H1 (cell line): ENCODE measurements at regions of chr18 and their contacts with region 1.

Region 1: DNA sequence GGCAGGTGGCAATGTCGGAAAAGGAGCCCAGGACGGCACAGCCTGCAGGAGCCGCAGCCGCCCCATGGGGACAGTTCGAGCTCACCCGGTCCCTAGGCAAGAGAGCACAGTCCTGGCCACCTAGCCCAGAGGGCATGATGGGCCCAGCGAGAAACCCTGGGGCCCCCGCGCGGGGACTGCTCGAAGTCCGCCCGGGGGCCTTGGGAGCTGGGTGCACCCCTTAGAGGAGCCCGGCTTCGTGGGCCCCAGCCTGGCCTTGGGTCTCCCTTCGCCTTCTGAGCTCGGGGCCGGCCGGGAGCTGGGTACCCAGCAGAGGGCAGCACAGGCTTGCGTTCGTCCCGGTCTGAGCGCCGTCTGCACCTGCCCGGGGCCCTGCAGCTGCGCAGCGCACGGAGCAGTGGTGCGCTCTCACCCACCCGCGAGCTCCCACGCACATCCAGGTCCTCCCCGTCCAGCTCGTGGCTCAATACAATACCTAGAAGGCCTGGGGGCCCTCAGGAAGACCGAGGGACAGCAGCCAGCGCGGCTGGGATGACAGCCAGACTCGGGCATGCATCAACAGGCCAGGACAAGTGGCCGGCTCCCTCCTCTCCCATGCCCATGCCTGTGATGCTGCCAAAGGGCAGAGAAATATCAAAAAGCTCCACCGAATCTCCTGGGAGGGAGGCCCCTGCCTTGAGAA is 96.2 kb upstream of the ZNF532 start:
- DNase-seq: peak; percentile 47 to 96
- H3K4me3 ChIP-seq: peak overlapping the region in 3 of 4 experiments; percentile 11 to 52 (median 23); a peak in 4 of 8 replicates
- H3K27ac ChIP-seq: no peak overlapping the region
- H3K4me1 ChIP-seq: peaks cover 0 to 4% (median 2%) of the 10 kb centered on the region in 4 experiments; a peak in 4 of 7 replicates
- H3K27me3 ChIP-seq: peaks cover 0 to 4% (median 0%) of the 10 kb centered on the region in 4 experiments; a peak in 2 of 7 replicates
- CTCF ChIP-seq: peak; percentile 83 to 95 (median 88)
- EP300 ChIP-seq: no peak
- POLR2A ChIP-seq: no peak
- RAD21 ChIP-seq: peak; percentile 94 to 98

Region 2: GRCh38 chr18:58511897-58512581 is 256.4 kb before region 1 on chr18:
- CTCF ChIA-PET with region 1: interaction called, 18 read pairs
- POLR2A ChIA-PET with region 1: no interaction called
- DNase-seq: peak; percentile 75
- H3K4me3 ChIP-seq: peak overlapping the region; percentile 11 to 48 (median 32); a peak in 5 of 8 replicates
- H3K27ac ChIP-seq: peak overlapping the region; percentile 78
- H3K4me1 ChIP-seq: peaks cover 11 to 19% (median 16%) of the 10 kb centered on the region in 4 experiments
- H3K27me3 ChIP-seq: no peaks in the 10 kb centered on the region
- CTCF ChIP-seq: no peak
- EP300 ChIP-seq: peak in 1 of 2 experiments; percentile 62; a peak in 1 of 3 replicates
- POLR2A ChIP-seq: no peak
- RAD21 ChIP-seq: no peak

Region 3: GRCh38 chr18:58661423-58661822 is 107.0 kb before region 1 on chr18:
- CTCF ChIA-PET with region 1: interaction called, 14 read pairs
- POLR2A ChIA-PET with region 1: no interaction called
- DNase-seq: peak in 1 of 2 experiments; percentile 37
- H3K4me3 ChIP-seq: no peak overlapping the region
- H3K27ac ChIP-seq: no peak overlapping the region
- H3K4me1 ChIP-seq: no peaks in the 10 kb centered on the region
- H3K27me3 ChIP-seq: no peaks in the 10 kb centered on the region
- CTCF ChIP-seq: peak in 2 of 3 experiments; percentile 25 to 35; a peak in 2 of 4 replicates
- EP300 ChIP-seq: no peak
- POLR2A ChIP-seq: no peak
- RAD21 ChIP-seq: peak; percentile 11 to 44; a peak in 3 of 4 replicates

Region 4: DNA sequence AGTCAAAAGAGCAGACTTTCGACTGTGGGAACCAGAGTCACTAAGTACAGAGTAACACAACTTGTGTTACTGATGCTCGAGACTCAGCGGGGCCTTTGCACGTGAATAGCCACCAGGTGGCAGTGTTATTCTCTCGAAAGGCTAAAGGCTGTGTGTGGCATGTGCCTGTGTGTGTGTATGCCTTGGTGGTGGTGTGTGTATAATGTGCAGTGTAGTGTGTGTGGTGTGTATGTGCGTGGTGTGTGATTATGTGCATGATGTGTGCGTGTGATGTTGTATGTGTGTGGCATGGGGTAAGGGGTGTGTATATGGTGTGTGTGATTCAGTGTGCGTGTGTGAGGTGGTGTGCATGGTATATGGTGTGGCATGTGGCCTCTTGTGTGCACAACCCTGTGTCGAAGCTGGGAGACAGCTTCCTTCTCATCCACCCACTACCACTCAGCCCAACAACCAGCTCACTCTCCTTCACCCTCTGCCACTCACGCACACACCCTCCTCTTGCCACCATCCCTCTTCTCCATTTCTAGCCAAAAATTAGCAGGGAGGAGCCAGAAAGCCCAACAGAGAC is 13.3 kb after region 1 on chr18:
- CTCF ChIA-PET with region 1: interaction called, 55 read pairs
- POLR2A ChIA-PET with region 1: no interaction called
- DNase-seq: peak; percentile 56 to 86
- H3K4me3 ChIP-seq: no peak overlapping the region
- H3K27ac ChIP-seq: no peak overlapping the region
- H3K4me1 ChIP-seq: peaks cover 5 to 17% (median 11%) of the 10 kb centered on the region in 4 experiments
- H3K27me3 ChIP-seq: no peaks in the 10 kb centered on the region
- CTCF ChIP-seq: peak; percentile 75 to 92 (median 86)
- EP300 ChIP-seq: no peak
- POLR2A ChIP-seq: no peak
- RAD21 ChIP-seq: peak; percentile 95 to 98

Region 5: DNA sequence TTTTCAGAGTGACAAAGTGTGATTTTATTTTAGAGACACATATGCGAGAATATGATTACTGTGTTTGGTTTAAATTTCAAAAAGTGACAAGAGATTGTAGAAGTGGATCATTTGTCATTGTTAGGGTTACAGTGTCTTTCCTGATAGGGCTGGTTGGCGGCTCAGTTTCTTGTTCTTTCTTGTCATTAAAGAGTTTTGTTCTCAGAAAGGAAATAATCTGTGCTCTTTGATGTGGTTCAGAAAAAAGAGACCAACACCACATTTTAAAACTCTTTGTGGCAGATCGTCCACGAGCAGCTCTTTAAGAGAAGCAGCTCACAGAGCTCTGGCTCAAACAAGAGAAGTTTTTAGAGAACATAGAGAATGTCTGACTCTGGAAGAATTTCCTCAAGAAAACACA is 50.6 kb after region 1 on chr18:
- CTCF ChIA-PET with region 1: no interaction called
- POLR2A ChIA-PET with region 1: no interaction called
- DNase-seq: no peak
- H3K4me3 ChIP-seq: no peak overlapping the region
- H3K27ac ChIP-seq: no peak overlapping the region
- H3K4me1 ChIP-seq: peaks cover 0 to 5% (median 4%) of the 10 kb centered on the region in 4 experiments; a peak in 2 of 7 replicates
- H3K27me3 ChIP-seq: no peaks in the 10 kb centered on the region
- CTCF ChIP-seq: no peak
- EP300 ChIP-seq: no peak
- POLR2A ChIP-seq: no peak
- RAD21 ChIP-seq: no peak

Region 6: GRCh38 chr18:59055345-59056032 is 287.1 kb after region 1 on chr18:
- CTCF ChIA-PET with region 1: interaction called, 591 read pairs
- POLR2A ChIA-PET with region 1: interaction called, 3 read pairs
- DNase-seq: peak in 1 of 2 experiments; percentile 59
- H3K4me3 ChIP-seq: no peak overlapping the region
- H3K27ac ChIP-seq: no peak overlapping the region
- H3K4me1 ChIP-seq: peaks cover 0 to under 1% (median 0%) of the 10 kb centered on the region in 4 experiments; a peak in 2 of 7 replicates
- H3K27me3 ChIP-seq: no peaks in the 10 kb centered on the region
- CTCF ChIP-seq: peak; percentile 64 to 80 (median 67)
- EP300 ChIP-seq: no peak
- POLR2A ChIP-seq: no peak
- RAD21 ChIP-seq: peak; percentile 84 to 85

Region 7: GRCh38 chr18:59085797-59086196 is 317.4 kb after region 1 on chr18:
- CTCF ChIA-PET with region 1: interaction called, 61 read pairs
- POLR2A ChIA-PET with region 1: no interaction called
- DNase-seq: no peak
- H3K4me3 ChIP-seq: no peak overlapping the region
- H3K27ac ChIP-seq: no peak overlapping the region
- H3K4me1 ChIP-seq: no peaks in the 10 kb centered on the region
- H3K27me3 ChIP-seq: no peaks in the 10 kb centered on the region
- CTCF ChIP-seq: no peak
- EP300 ChIP-seq: no peak
- POLR2A ChIP-seq: no peak
- RAD21 ChIP-seq: no peak